A673 (cell line): ENCODE measurements at regions of chr11 and their contacts with region 1.

Region 1: GRCh38 chr11:48172818-48173609 is 43.6 kb upstream of the OR4B1 start:
- DNase-seq: peak; percentile 88
- H3K4me3 ChIP-seq: peak overlapping the region; percentile 0
- H3K27ac ChIP-seq: no peak overlapping the region
- H3K4me1 ChIP-seq: no peaks in the 10 kb centered on the region
- H3K27me3 ChIP-seq: no peaks in the 10 kb centered on the region
- CTCF ChIP-seq: peak; percentile 100

Region 2: DNA sequence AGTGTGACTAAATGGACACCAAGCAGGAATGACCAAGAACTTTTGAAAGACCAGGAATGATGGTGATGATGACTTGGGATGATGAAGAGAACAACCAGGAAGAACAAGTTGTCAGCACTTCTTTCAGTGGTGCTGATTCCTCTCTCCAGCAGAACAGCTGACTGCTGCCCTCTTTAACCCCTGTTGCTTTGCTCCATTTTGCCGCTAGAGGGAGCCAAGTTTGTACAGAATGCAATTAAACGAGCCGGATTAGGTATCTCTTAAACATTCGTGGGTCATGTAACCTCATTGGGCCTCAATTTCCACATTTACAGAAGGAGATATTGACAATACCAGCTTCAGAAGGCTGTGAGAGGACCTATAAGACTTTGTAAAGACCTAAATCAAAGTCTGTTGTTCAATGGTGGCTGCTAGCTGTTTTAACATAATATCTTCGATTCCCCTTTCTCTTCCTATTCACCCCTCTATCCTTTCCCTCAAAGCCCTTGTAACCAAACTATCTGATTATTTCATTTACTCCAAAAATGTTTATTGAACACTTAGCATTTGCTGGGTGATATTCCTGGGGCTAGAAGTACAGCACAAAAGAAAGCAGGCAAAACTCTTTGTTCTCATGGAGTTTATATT is 134.9 kb after region 1 on chr11:
- CTCF ChIA-PET with region 1: interaction called, 3 read pairs
- POLR2A ChIA-PET with region 1: no interaction called
- intact Hi-C with region 1: loop called (anchors 2 kb)
- DNase-seq: peak; percentile 91
- H3K4me3 ChIP-seq: no peak overlapping the region
- H3K27ac ChIP-seq: no peak overlapping the region
- H3K4me1 ChIP-seq: no peaks in the 10 kb centered on the region
- H3K27me3 ChIP-seq: no peaks in the 10 kb centered on the region
- CTCF ChIP-seq: peak; percentile 100

Region 3: DNA sequence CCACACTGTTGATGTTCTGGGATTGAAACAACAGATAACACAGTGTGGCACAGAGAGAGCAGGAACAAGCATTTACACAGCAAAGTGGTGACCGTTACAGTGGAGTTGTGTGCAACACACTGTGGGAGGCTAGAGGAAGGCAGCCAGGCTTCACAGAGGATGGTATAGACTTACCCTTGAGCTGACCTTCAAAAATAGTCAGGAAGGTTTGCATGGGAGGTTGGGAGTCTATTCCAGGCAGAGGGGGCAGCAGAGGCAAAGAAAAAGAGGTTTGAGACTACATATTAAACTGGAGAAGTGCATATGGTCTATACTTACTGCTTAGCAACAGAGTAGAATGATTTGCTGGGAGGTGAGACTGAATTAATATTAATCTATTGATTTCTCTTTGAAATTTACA is 1057.5 kb after region 1 on chr11:
- CTCF ChIA-PET with region 1: no interaction called
- POLR2A ChIA-PET with region 1: no interaction called
- intact Hi-C with region 1: loop called (anchors 5 kb)
- DNase-seq: peak; percentile 42
- H3K4me3 ChIP-seq: no peak overlapping the region
- H3K27ac ChIP-seq: no peak overlapping the region
- H3K4me1 ChIP-seq: peaks cover 10% of the 10 kb centered on the region
- H3K27me3 ChIP-seq: no peaks in the 10 kb centered on the region
- CTCF ChIP-seq: 0 out of 2 replicates have a peak, but pooled peaks have one; percentile 18

Region 4: DNA sequence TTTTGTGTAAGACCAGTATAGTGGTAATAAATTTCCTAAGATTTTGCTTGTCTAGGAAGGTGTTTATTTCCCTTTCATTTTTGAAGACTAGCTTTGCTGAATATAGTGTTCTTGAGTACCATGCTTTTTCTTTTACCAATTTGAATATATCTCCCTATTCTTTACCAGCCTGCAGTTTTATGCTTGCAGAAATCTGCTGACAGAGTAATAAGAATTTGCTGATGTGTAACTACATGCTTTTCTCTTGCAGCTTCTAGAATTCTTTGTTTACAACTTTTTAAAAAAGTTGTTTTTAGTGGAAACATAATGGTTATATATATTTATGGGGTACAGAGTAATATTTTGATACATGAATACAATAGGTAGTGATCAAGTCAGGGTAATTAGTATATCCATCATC is 1360.2 kb after region 1 on chr11:
- CTCF ChIA-PET with region 1: no interaction called
- POLR2A ChIA-PET with region 1: no interaction called
- intact Hi-C with region 1: loop called (anchors 5 kb)
- DNase-seq: no peak
- H3K4me3 ChIP-seq: no peak overlapping the region
- H3K27ac ChIP-seq: no peak overlapping the region
- H3K4me1 ChIP-seq: no peaks in the 10 kb centered on the region
- H3K27me3 ChIP-seq: no peaks in the 10 kb centered on the region
- CTCF ChIP-seq: no peak